ENCODE measurements at regions of chr20 and their contacts with region 1.

Region 1: GRCh38 chr20:35883778-35884540 is 70.3 kb downstream of the SCAND1 start:
- DNase-seq: peak; percentile 78 to 79
- H3K4me3 ChIP-seq: no peak overlapping the region
- H3K27ac ChIP-seq: peak overlapping the region; percentile 44 to 68 (median 51)
- H3K4me1 ChIP-seq: peaks cover 5 to 23% of the 10 kb centered on the region in 2 donors
- H3K27me3 ChIP-seq: no peaks in the 10 kb centered on the region
- CTCF ChIP-seq: peak; percentile 30 to 81 (median 74)
- POLR2A ChIP-seq: peak in 1 of 2 donors; percentile 3

Region 2: GRCh38 chr20:35619196-35620095 is 264.5 kb before region 1 on chr20:
- intact Hi-C with region 1: loop called (anchors 5 kb)
- DNase-seq: peak; percentile 80 to 81
- H3K4me3 ChIP-seq: peak overlapping the region in 2 of 3 donors; percentile 43 to 44
- H3K27ac ChIP-seq: no peak overlapping the region
- H3K4me1 ChIP-seq: peaks cover 32 to 37% of the 10 kb centered on the region in 2 donors
- H3K27me3 ChIP-seq: no peaks in the 10 kb centered on the region
- CTCF ChIP-seq: peak in 3 of 6 experiments; percentile 10 to 26 (median 24)
- POLR2A ChIP-seq: no peak

Region 3: GRCh38 chr20:35718972-35719635 is 164.9 kb before region 1 on chr20:
- intact Hi-C with region 1: loop called (anchors 10 kb)
- DNase-seq: no peak
- H3K4me3 ChIP-seq: no peak overlapping the region
- H3K27ac ChIP-seq: no peak overlapping the region
- H3K4me1 ChIP-seq: no peaks in the 10 kb centered on the region
- H3K27me3 ChIP-seq: no peaks in the 10 kb centered on the region
- CTCF ChIP-seq: no peak
- POLR2A ChIP-seq: no peak

Region 4: DNA sequence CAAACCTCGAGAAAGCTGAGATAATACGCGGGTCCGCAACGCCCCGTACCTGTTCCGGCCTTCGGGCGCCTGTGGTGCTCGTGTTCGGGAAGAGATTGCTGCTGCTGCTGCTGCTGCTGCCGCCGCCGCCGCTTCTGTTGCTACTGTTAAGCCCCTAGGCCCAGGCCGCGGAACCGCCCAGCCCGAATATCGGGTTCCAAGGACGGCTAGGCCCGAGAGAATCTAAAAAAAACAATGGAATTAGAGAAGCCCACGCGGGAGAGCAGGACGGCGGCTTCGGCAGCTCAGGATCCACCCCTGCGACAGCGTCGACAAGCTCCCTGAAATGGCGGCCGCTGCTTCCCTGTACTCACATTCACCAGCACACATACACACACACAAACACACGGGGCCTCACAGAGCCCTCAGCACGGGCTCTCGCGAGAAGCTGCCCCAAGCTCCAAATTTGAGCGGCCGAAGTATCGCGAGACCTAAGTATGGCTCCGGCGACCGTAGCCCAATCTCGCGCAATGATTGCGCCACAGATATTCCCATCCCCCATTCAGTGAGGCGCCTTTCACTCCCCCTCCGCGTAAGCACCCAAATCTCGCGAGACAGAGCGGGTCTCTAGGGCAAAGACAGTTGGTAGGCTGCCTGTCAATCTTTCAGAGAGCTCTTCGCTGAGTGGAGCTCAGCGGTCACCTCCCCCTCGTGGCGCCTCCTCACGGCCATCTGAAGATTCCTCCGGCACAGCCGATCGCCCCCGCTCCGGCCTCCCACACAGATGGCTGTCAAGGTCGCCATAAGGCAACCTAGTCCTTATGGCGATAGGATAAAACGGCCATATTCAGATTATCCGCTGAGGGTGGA is 141.8 kb before region 1 on chr20 and contains the start of gene RBM39:
- intact Hi-C with region 1: loop called (anchors 10 kb)
- DNase-seq: peak; percentile 100
- H3K4me3 ChIP-seq: peak within 1 kb of the TSS; percentile 66 to 96 (median 92)
- H3K27ac ChIP-seq: peak within 1 kb of the TSS; percentile 100
- H3K4me1 ChIP-seq: peaks cover 24 to 26% of the 10 kb centered on the region in 2 donors
- H3K27me3 ChIP-seq: no peaks in the 10 kb centered on the region
- CTCF ChIP-seq: peak in 4 of 6 experiments; percentile 6 to 45 (median 41)
- POLR2A ChIP-seq: peak; percentile 96 to 99
- total RNA-seq, gene RBM39: 315 to 475 (median 368) TPM